GM18951 (cell line): ENCODE measurements at regions of chr10 and their contacts with region 1.

Region 1: DNA sequence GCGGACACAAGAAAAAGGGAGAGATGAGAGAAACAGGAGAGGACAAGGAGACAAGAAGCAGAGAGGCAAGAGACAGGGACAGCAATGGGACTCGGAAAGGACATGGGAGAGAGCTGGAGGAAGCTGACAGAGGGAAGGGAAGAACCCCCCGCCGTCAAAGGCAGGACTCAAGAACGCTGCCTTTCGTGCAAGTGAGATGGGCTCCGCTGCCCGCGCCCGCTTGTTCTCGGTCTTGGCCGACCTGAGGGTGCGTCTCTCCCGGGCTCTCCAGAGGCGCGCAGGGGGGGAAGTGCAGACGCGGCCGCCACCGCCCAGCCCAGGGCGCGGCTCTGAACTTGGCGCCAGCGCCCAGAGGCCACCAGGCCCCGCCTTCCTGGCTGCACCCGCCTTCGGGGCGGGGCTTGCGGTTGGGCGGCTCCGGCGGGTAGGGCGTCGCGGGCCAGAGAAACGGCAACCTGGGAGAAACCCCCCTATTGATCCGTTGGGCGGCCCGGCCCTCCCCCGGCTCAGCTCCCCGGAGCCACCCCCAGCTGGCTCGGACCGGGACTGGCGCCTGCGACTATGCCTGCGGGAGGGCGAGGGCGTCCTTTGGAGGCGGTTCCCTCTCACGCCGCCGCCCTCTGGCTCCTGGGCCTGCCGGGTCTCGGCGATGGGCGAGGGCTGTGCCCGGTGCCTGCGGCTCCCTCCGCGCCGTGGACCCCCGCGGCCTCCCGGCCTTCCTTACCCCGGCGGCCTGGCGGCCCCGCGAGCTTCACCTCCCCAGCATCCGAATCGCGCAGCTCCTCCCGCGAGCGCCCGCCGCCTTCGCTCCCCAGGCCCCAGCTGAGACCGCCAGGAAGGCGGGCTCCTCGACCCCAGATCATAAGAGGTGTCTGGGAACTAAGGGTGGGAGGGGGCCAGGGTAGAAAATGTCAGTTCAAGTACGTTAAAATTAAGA is 2.2 kb upstream of the ANTXRL start:
- POLR2A ChIP-seq: peak; percentile 58

Region 2: GRCh38 chr10:45339894-45340293 is 944.7 kb before region 1 on chr10:
- in situ Hi-C with region 1: no loop called
- POLR2A ChIP-seq: no peak

Region 3: DNA sequence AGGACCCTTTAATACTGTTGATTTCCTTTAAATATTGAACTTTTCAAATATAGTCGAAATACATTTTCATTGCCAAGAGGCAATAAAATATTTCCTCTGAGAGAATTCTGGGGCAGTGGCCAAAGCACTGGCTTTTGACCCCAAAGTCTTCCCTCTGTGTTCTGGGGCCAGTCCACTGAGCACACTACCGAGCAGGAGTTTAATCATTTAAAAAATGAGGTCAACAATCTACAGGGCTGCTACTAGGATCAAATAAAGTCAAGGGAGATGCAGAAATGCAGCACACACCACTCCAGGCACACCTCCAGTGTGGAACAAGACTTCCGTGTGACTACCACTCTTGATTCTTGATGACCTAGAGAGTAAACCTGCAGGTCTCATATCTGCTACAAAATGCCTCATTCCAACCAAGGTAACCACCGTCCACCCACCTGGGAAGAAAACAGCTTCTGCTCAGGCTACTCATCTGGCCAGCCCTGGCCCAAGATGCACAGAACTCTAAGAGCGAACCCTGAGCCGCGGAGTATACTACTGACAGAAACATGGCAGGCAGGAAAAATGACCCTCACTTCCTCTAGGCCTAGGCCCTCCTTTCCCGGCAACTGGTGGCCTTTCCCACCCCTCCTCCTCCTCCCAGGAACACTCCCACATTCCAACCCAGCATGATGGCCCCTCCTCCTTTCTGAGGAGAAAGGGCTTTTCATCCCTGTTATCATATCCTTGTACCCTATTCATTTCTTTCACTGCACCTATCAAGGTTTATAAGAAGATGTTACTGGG is 812.8 kb before region 1 on chr10:
- in situ Hi-C with region 1: no loop called
- POLR2A ChIP-seq: no peak

Region 4: GRCh38 chr10:46022978-46023702 is 261.4 kb before region 1 on chr10:
- in situ Hi-C with region 1: no loop called
- POLR2A ChIP-seq: no peak

Region 5: GRCh38 chr10:46106410-46107255 is 177.9 kb before region 1 on chr10:
- in situ Hi-C with region 1: loop called (anchors 5 kb)
- POLR2A ChIP-seq: no peak

Region 6: GRCh38 chr10:47384148-47384921 is 1099.8 kb after region 1 on chr10 and contains the start of gene ZNF488:
- in situ Hi-C with region 1: loop called (anchors 5 kb)
- POLR2A ChIP-seq: no peak